CD14-positive monocyte (primary cell): ENCODE measurements at regions of chr7 and their contacts with region 1.

Region 1: GRCh38 chr7:76179686-76180085 is 22.0 kb upstream of the SRRM3 start:
- DNase-seq: no peak
- H3K4me3 ChIP-seq: no peak overlapping the region
- H3K4me3 Mint-ChIP-seq: no peak overlapping the region
- H3K27ac ChIP-seq: no peak overlapping the region
- H3K27ac Mint-ChIP-seq: no peak overlapping the region
- H3K4me1 ChIP-seq: peaks cover 0 to 8% of the 10 kb centered on the region in 2 donors
- H3K4me1 Mint-ChIP-seq: peaks cover 5% of the 10 kb centered on the region
- H3K27me3 ChIP-seq: no peaks in the 10 kb centered on the region
- H3K27me3 Mint-ChIP-seq: peaks cover 7 to 14% (median 8%) of the 10 kb centered on the region in 3 donors
- CTCF ChIP-seq: no peak

Region 2: GRCh38 chr7:76142861-76143260 is 36.8 kb before region 1 on chr7:
- intact Hi-C with region 1: no loop called
- DNase-seq: no peak
- H3K4me3 ChIP-seq: no peak overlapping the region
- H3K4me3 Mint-ChIP-seq: no peak overlapping the region
- H3K27ac ChIP-seq: no peak overlapping the region
- H3K27ac Mint-ChIP-seq: peak overlapping the region in 1 of 7 donors; percentile 59
- H3K4me1 ChIP-seq: no peaks in the 10 kb centered on the region
- H3K4me1 Mint-ChIP-seq: peaks cover 8% of the 10 kb centered on the region
- H3K27me3 ChIP-seq: no peaks in the 10 kb centered on the region
- H3K27me3 Mint-ChIP-seq: peaks cover 1 to 3% (median 2%) of the 10 kb centered on the region in 3 donors
- CTCF ChIP-seq: no peak

Region 3: GRCh38 chr7:76262683-76263402 is 83.2 kb after region 1 on chr7:
- intact Hi-C with region 1: loop called in 1 of 2 experiments (anchors 5 kb)
- DNase-seq: peak; percentile 21 to 48 (median 42)
- H3K4me3 ChIP-seq: no peak overlapping the region
- H3K4me3 Mint-ChIP-seq: no peak overlapping the region
- H3K27ac ChIP-seq: no peak overlapping the region
- H3K27ac Mint-ChIP-seq: no peak overlapping the region
- H3K4me1 ChIP-seq: peaks cover 0 to 5% of the 10 kb centered on the region in 2 donors
- H3K4me1 Mint-ChIP-seq: peaks cover 7% of the 10 kb centered on the region
- H3K27me3 ChIP-seq: peaks cover 14 to 37% of the 10 kb centered on the region in 2 donors
- H3K27me3 Mint-ChIP-seq: peaks cover 39 to 60% (median 49%) of the 10 kb centered on the region in 3 donors
- CTCF ChIP-seq: peak; percentile 81

Region 4: GRCh38 chr7:76314042-76314721 is 134.5 kb after region 1 on chr7:
- intact Hi-C with region 1: loop called (anchors 5 to 10 kb)
- DNase-seq: peak; percentile 92 to 94 (median 93)
- H3K4me3 ChIP-seq: no peak overlapping the region
- H3K4me3 Mint-ChIP-seq: no peak overlapping the region
- H3K27ac ChIP-seq: no peak overlapping the region
- H3K27ac Mint-ChIP-seq: peak overlapping the region in 1 of 7 donors; percentile 68
- H3K4me1 ChIP-seq: peaks cover 13 to 19% of the 10 kb centered on the region in 2 donors
- H3K4me1 Mint-ChIP-seq: peaks cover 21% of the 10 kb centered on the region
- H3K27me3 ChIP-seq: no peaks in the 10 kb centered on the region
- H3K27me3 Mint-ChIP-seq: no peaks in the 10 kb centered on the region
- CTCF ChIP-seq: peak; percentile 99

Region 5: DNA sequence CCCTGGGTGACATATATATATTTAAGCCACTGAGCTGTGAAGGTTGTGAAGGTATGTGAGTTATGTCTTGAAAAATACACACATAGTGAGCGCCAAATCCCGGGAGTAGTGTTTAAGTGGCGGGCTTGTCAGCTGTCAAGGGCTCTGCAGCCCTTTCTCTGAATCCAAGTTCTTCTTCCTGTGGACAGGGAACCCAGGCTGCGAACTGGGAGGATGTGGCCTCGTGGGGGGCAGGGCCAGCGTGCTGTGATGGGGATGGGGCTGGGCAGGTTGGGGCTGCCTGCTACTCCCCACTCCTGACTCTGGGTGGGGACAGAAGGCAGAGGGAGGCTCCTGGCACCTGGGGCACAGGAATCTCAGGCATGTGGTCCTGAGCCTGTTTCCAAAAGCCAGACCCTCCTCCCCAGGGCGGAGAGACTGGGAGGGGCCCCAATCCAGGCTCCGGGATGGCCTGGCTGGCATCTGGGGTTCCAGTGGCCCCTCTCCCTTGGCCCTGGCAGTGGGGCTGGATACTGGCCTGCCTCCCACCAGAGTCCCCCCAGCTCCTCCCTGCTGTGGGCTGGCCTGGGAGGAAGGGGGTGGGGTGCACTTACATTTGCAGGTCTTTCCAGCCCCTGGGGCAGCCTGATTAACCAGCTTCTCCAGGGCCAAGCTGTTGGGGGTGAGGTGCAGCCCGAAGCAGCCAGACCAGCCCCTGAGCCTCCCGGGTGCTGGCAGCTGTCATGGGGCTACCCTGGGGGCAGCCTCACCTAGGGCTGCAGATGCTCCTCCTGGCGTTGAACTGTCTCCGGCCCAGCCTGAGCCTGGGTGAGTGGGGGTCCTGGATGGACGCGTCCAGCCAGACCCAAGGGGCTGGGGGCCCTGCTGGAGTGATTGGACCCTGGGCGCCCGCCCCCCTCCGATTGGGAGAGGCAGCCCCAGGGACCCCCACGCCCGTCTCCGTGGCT is 330.5 kb after region 1 on chr7 and contains the start of gene UPK3B:
- intact Hi-C with region 1: loop called in 1 of 2 experiments (anchors 10 kb)
- DNase-seq: no peak
- H3K4me3 ChIP-seq: no peak within 1 kb of the TSS
- H3K4me3 Mint-ChIP-seq: no peak within 1 kb of the TSS
- H3K27ac ChIP-seq: no peak within 1 kb of the TSS
- H3K27ac Mint-ChIP-seq: peak within 1 kb of the TSS in 3 of 7 donors; percentile 24 to 63 (median 43)
- H3K4me1 ChIP-seq: peaks cover 7 to 9% of the 10 kb centered on the region in 2 donors
- H3K4me1 Mint-ChIP-seq: peaks cover 2% of the 10 kb centered on the region
- H3K27me3 ChIP-seq: no peaks in the 10 kb centered on the region
- H3K27me3 Mint-ChIP-seq: peaks cover 0 to 3% (median 2%) of the 10 kb centered on the region in 3 donors
- CTCF ChIP-seq: no peak
- polyA plus RNA-seq, gene UPK3B: 0.33 TPM in 1 of 3 donors, not detected in the others